Activated naive CD4-positive, alpha-beta T cell treated with anti-CD3 and anti-CD28 coated beads for 36 hours (primary cell): ENCODE measurements at regions of chr17 and their contacts with region 1.

Region 1: DNA sequence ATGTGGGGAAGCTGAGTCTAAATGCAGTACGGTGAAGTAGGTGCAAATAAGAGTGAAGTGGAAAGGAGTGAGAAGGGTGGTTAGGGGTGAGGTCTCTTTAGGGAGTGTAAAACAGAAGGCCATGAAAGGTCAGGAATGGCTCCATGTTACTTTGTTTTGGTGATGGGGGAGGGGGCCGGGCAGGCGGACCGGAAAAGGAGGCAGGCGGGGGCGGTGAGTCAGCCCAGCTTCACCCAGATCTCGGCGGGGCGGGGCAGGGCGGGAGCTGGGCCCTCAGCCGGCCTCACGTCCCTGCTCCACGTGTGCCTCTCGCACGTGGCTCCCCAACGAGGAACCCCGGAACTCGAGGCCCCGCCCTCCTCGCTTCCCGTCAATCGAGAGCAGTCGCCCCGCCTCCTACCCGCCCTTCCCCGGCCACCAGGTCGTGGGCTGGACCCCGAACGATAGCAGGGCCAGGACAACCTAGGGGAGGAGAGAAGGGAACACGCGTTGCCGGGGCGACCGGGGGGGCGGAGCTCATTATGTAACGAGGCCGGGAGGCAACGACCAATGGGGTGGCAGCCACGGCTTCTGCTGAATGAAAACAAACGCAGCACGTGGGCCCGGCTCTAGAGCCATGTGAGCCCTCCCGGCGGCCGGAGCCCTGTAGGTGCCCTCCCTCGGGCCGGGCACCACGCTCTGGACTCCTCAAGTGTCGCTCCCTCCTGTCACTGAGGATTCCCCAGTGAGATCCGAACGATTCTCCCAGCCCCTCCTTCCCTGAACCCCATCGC is 1.4 kb downstream of the NR1D1 start:
- DNase-seq: peak; percentile 98
- H3K4me3 Mint-ChIP-seq: peak overlapping the region; percentile 89
- H3K27ac Mint-ChIP-seq: peak overlapping the region; percentile 95
- H3K4me1 Mint-ChIP-seq: peaks cover 85% of the 10 kb centered on the region
- H3K27me3 Mint-ChIP-seq: no peaks in the 10 kb centered on the region

Region 2: GRCh38 chr17:39401412-39402243 is 697.4 kb before region 1 on chr17 and contains the start of gene FBXL20:
- CTCF ChIA-PET with region 1: no interaction called
- intact Hi-C with region 1: loop called (anchors 5 kb)
- DNase-seq: peak; percentile 96
- H3K4me3 Mint-ChIP-seq: peak within 1 kb of the TSS; percentile 91
- H3K27ac Mint-ChIP-seq: peak within 1 kb of the TSS; percentile 90
- H3K4me1 Mint-ChIP-seq: peaks cover 61% of the 10 kb centered on the region
- H3K27me3 Mint-ChIP-seq: no peaks in the 10 kb centered on the region
- total RNA-seq, gene FBXL20: 14.2 to 15.4 TPM

Region 3: GRCh38 chr17:39863918-39864746 is 234.9 kb before region 1 on chr17 and contains the start of gene IKZF3:
- CTCF ChIA-PET with region 1: no interaction called
- intact Hi-C with region 1: loop called (anchors 5 kb)
- DNase-seq: peak; percentile 94
- H3K4me3 Mint-ChIP-seq: peak within 1 kb of the TSS; percentile 92
- H3K27ac Mint-ChIP-seq: peak within 1 kb of the TSS; percentile 95
- H3K4me1 Mint-ChIP-seq: peaks cover 61% of the 10 kb centered on the region
- H3K27me3 Mint-ChIP-seq: no peaks in the 10 kb centered on the region
- total RNA-seq, gene IKZF3: 34.2 to 36.1 TPM

Region 4: DNA sequence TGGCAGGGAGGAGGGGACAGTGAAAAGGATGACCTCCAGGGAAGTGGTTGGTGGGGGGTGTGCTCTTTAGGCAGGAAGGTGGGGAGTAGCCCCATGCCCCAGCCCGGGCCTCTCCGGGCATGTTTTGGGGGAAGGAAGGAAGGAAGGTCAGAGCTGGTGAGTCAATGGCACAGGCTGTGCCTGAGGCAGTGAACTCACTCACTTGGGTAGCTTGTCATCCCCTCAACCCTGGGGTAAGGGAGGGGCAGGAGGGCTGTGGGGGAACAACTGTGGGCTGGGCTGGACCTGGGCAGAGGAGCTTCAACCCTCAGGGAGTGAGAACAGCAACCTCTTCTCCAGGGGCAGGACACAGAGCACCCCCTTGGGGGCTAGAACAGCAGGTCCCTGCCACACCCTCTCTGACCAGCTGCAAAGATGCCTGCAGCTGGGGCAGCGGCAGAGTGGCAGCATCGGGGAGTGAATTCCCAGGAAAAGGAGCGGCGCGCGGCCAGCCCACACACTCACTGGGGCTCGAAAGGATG is 77.5 kb before region 1 on chr17:
- CTCF ChIA-PET with region 1: no interaction called
- intact Hi-C with region 1: no loop called
- DNase-seq: no peak
- H3K4me3 Mint-ChIP-seq: no peak overlapping the region
- H3K27ac Mint-ChIP-seq: no peak overlapping the region
- H3K4me1 Mint-ChIP-seq: peaks cover 10% of the 10 kb centered on the region
- H3K27me3 Mint-ChIP-seq: no peaks in the 10 kb centered on the region

Region 5: DNA sequence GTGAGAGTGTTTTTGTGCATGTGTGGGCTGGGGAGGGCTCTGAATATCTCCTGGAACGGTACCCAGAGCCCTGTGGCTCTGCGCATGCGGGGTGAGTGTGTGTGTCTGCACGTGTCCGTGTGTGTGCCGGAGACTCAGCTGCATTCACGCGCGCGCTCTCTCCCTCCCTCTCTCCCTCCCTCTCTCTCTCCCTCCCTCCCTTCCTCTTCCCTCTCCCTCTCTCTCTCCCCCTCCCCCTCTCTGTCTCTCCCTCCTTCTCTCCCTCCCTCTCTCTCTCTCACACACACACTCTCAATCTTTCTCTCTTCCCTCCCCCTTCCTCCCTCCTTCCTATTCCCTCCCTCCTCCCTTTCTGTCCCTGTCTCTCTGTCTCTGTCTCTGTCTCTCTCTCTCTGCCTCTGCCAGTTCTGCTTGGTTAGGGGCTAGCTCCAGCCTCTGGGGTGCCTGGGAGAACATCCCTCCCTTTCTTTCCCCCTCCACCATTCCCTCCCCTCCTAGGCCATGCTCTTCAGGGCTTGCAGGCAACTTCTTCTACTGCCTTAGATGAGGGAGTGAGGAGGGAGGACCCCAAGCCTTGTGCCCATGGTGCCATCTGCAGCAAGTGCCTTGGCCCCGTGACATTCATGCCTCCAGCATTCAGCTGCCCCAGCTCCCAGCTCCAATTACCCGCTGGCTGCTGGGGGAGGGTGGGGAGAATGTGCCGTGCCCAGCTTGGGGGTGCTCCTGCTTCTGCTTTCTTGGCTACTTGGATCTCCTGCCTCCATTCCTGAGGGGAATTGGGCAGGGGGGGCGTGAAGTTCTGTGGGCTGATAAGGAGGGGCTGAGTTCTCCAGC is 29.9 kb before region 1 on chr17:
- CTCF ChIA-PET with region 1: interaction called, 6 read pairs
- intact Hi-C with region 1: loop called (anchors 1 kb)
- DNase-seq: peak; percentile 89
- H3K4me3 Mint-ChIP-seq: peak overlapping the region; percentile 73
- H3K27ac Mint-ChIP-seq: peak overlapping the region; percentile 92
- H3K4me1 Mint-ChIP-seq: peaks cover 72% of the 10 kb centered on the region
- H3K27me3 Mint-ChIP-seq: no peaks in the 10 kb centered on the region

Region 6: GRCh38 chr17:40139566-40140058 is 40.6 kb after region 1 on chr17:
- CTCF ChIA-PET with region 1: no interaction called
- intact Hi-C with region 1: loop called (anchors 1 kb)
- DNase-seq: no peak
- H3K4me3 Mint-ChIP-seq: peak overlapping the region; percentile 85
- H3K27ac Mint-ChIP-seq: peak overlapping the region; percentile 98
- H3K4me1 Mint-ChIP-seq: peaks cover 42% of the 10 kb centered on the region
- H3K27me3 Mint-ChIP-seq: no peaks in the 10 kb centered on the region

Region 7: GRCh38 chr17:40542558-40543411 is 443.8 kb after region 1 on chr17:
- CTCF ChIA-PET with region 1: no interaction called
- intact Hi-C with region 1: loop called (anchors 5 kb)
- DNase-seq: peak; percentile 89
- H3K4me3 Mint-ChIP-seq: peak overlapping the region; percentile 66
- H3K27ac Mint-ChIP-seq: peak overlapping the region; percentile 96
- H3K4me1 Mint-ChIP-seq: peaks cover 83% of the 10 kb centered on the region
- H3K27me3 Mint-ChIP-seq: no peaks in the 10 kb centered on the region